Panc1 (cell line): ENCODE measurements at regions of chr12 and their contacts with region 1.

Region 1: DNA sequence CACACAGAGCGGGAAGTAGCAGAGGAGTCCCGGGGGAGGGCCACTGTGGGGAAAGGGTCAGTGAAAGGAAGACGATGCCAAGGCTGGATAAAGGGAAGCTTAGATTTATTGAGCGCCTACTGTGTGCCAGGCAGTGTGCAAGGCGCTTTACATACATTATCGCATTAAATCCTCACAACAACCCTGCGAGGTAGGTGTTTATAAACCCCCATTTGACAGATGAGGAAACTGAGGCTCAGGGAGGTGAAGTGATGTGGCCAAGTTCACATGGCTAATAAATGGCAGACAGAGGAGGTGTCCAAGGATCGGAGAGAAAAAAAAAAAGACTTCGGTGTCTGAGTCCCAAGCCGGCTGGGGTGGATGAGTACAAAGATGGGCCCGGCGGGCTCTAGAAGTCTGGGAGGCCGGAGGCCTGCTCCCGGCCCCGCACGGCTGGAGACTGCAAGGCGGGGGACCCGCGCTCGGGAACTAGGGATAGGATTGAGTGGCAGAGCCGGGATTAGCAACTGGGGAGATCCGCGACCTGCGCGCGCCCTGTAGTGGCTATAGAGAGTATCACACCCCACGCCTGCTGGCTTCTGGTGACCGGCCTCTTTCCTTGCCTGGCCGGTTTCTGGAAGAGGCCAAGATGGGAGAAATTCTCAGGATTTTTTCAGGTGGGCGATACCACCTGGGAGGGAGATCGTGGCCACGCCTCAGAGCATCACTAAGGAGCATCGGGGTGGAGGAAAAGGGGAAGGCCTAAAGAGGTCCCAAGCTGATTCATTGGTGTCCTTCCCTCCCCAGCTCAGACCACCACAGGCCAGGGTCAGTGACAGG is 3.9 kb downstream of the DDN start:
- DNase-seq: peak; percentile 48
- ATAC-seq: peak; percentile 77
- H3K4me3 ChIP-seq: peak overlapping the region; percentile 26 to 50
- H3K27ac ChIP-seq: no peak overlapping the region
- H3K4me1 ChIP-seq: peaks cover 12% of the 10 kb centered on the region
- H3K27me3 ChIP-seq: no peaks in the 10 kb centered on the region
- CTCF ChIP-seq: peak; percentile 95

Region 2: GRCh38 chr12:48659863-48660262 is 335.4 kb before region 1 on chr12:
- CTCF ChIA-PET with region 1: no interaction called
- POLR2A ChIA-PET with region 1: no interaction called
- in situ Hi-C with region 1: no loop called
- intact Hi-C with region 1: no loop called
- DNase-seq: no peak
- ATAC-seq: no peak
- H3K4me3 ChIP-seq: no peak overlapping the region
- H3K27ac ChIP-seq: no peak overlapping the region
- H3K4me1 ChIP-seq: no peaks in the 10 kb centered on the region
- H3K27me3 ChIP-seq: no peaks in the 10 kb centered on the region
- CTCF ChIP-seq: no peak

Region 3: GRCh38 chr12:48924617-48925303 is 70.5 kb before region 1 on chr12:
- CTCF ChIA-PET with region 1: interaction called, 16 read pairs
- POLR2A ChIA-PET with region 1: no interaction called
- in situ Hi-C with region 1: no loop called
- intact Hi-C with region 1: no loop called
- DNase-seq: no peak
- ATAC-seq: peak; percentile 72
- H3K4me3 ChIP-seq: peak overlapping the region; percentile 40
- H3K27ac ChIP-seq: no peak overlapping the region
- H3K4me1 ChIP-seq: no peaks in the 10 kb centered on the region
- H3K27me3 ChIP-seq: no peaks in the 10 kb centered on the region
- CTCF ChIP-seq: no peak; the same call in 1 of the 2 replicates

Region 4: DNA sequence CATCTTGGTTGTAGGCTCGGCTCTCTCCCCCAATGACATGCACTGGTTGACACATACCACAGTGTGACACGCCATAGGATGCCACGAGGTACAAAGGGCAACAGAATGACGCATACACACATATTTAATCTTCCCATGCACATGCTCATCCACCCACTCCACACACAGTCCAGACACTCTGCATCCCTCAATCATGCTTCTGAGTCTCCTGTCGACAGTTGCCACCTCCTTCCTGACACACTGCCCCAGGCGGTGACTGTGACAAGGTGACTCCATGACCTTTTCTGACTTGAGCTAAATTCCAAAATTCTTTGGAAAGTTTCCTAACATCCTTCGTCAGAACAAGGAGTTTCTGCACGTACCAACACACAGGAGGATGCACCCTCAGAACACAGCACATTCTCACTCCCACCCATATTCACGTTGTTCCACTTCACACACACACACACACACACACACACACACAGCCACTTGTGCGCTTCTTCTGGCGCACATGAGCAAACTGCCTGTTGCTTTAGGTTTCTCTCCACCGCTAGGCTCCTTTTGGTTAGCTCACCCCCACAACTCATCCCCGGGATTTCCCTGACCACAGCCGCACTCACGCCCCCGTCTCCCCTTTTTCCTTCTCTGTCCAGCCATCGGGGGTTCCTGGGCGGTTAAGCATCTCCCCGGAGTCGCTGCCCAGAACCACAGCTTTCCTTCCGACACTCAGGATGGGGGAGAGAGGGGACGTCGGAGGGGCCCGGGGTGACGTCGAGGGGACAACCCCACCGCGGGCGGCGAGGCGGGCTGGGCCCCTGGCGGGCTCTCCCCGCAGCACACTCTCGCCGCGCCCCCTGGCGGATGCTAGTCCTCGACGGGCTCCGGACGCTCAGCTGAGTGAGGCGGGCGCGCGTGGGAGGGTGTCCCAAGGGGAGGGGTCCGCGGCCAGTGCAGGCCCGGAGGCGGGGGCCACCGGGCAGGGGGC is 17.7 kb before region 1 on chr12:
- CTCF ChIA-PET with region 1: interaction called, 13 read pairs
- POLR2A ChIA-PET with region 1: no interaction called
- in situ Hi-C with region 1: no loop called
- intact Hi-C with region 1: no loop called
- DNase-seq: no peak
- ATAC-seq: peak; percentile 77
- H3K4me3 ChIP-seq: peak overlapping the region; percentile 25 to 39; a peak in 2 of 4 replicates
- H3K27ac ChIP-seq: no peak overlapping the region
- H3K4me1 ChIP-seq: peaks cover 9% of the 10 kb centered on the region
- H3K27me3 ChIP-seq: peaks cover 12% of the 10 kb centered on the region
- CTCF ChIP-seq: peak; percentile 96

Region 5: DNA sequence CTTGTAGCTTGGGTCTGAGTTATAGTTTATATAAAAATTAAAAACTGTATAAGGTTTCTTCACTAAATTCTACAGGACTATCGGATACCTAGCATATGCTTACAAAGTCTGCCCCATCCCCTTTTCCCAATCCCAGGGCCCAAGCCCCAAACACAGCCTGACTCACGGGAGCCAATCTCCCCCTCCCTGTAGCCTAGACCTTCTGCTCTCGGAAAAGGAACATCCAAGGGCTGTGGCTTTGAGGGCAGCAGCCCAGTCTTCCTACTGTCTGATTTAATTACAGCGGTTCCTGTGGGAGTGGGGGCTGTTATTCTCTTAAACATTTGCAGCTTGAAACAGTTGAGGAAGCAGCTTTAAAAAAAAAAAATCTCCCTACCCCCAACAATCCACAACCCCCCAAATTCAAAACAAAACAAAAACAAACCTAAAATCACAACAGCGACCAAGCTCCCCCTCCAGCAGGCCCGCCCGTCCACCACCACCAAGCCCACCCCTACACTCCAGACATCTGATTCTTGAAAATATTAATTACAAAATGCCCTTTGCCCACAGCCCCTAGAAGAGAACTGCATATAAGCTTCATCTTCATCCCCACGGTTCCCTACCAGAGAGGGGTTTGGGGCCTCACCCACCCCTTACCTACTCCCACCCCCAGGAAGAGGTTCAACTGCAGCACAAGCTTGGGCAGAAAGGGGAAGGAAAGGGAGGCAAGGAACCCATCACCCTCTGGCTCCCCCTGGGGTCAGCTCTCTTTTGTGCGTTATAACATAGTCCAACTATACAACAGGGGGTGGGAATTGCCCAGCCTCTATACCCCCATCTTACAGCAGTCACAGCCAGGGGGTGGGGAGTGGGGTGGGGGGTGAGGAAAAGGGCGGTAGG is 24.4 kb after region 1 on chr12:
- CTCF ChIA-PET with region 1: interaction called, 12 read pairs
- POLR2A ChIA-PET with region 1: interaction called, 3 read pairs
- in situ Hi-C with region 1: no loop called
- intact Hi-C with region 1: no loop called
- DNase-seq: no peak
- ATAC-seq: peak; percentile 39; the same call in 1 of the 2 replicates
- H3K4me3 ChIP-seq: no peak overlapping the region
- H3K27ac ChIP-seq: peak overlapping the region; percentile 90
- H3K4me1 ChIP-seq: peaks cover 15% of the 10 kb centered on the region
- H3K27me3 ChIP-seq: no peaks in the 10 kb centered on the region
- CTCF ChIP-seq: no peak; the same call in 1 of the 2 replicates

Region 6: GRCh38 chr12:49253088-49253487 is 257.8 kb after region 1 on chr12:
- CTCF ChIA-PET with region 1: no interaction called
- POLR2A ChIA-PET with region 1: interaction called, 12 read pairs
- in situ Hi-C with region 1: no loop called
- intact Hi-C with region 1: no loop called
- DNase-seq: no peak
- ATAC-seq: peak; percentile 82
- H3K4me3 ChIP-seq: no peak overlapping the region
- H3K27ac ChIP-seq: no peak overlapping the region
- H3K4me1 ChIP-seq: no peaks in the 10 kb centered on the region
- H3K27me3 ChIP-seq: no peaks in the 10 kb centered on the region
- CTCF ChIP-seq: no peak